HepG2 (cell line): ENCODE measurements at regions of chr14 and their contacts with region 1.

Region 1: DNA sequence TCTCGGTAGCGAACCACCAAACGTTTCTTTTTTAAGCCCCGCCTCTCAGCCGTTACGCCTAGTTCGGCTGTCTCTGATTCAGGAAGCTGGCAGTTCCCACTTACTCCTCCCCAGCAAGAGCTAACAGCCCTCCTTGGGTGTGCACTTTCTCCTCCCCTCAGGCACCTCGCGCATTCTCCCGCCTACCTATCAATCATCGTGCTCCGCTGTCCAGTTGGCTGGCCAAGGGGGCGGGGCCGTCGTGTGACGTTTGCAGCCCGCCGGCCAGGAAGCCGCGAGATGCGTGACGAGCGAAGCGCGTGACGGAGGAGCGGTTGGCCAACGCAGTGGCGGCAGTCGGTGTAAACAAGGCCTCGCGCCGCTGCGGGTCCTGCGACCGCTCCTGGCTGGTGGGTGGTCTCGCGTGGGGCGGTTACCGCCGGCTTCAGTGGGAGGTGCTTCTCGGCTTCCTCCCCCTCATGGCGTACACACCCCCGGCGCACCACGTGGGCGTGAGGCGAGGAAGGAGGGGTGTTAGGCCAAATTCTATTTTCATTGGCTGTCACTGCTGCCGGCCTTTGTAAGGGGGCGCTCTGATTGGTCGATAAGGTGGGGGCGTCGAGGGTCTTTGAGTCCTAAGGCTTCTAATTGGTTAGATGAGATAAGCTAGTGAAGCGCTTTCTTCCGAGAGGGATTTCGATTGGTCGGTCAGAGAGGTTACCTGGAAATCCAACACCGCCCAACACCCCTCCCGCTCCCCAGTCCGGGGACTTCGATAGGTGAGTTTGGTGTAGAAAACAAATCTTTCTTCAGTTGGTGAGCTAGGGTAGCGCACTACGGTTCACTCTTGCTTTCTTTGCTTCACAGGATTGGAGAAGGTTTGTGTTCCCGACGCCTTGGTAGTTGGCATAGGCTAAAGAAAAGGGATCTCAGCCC is at the starts of genes DCAF11 and NRL:
- DNase-seq: peak; percentile 100
- ATAC-seq: peak; percentile 88
- H3K4me3 ChIP-seq: peak within 1 kb of the TSS; percentile 66 to 96 (median 85)
- H3K27ac ChIP-seq: peak within 1 kb of the TSS; percentile 98
- H3K4me1 ChIP-seq: peaks cover 48% of the 10 kb centered on the region
- H3K27me3 ChIP-seq: no peaks in the 10 kb centered on the region; a peak in 1 of 5 replicates
- CTCF ChIP-seq: peak; percentile 50
- EP300 ChIP-seq: peak in 1 of 2 experiments; percentile 77; a peak in 2 of 4 replicates
- POLR2A ChIP-seq: peak in 1 of 2 experiments; percentile 97; a peak in 2 of 4 replicates
- RAD21 ChIP-seq: peak; percentile 78
- total RNA-seq, gene DCAF11: 257 and 342 TPM in 2 replicates
- total RNA-seq, gene NRL: 4.7 and 5.2 TPM in 2 replicates

Region 2: DNA sequence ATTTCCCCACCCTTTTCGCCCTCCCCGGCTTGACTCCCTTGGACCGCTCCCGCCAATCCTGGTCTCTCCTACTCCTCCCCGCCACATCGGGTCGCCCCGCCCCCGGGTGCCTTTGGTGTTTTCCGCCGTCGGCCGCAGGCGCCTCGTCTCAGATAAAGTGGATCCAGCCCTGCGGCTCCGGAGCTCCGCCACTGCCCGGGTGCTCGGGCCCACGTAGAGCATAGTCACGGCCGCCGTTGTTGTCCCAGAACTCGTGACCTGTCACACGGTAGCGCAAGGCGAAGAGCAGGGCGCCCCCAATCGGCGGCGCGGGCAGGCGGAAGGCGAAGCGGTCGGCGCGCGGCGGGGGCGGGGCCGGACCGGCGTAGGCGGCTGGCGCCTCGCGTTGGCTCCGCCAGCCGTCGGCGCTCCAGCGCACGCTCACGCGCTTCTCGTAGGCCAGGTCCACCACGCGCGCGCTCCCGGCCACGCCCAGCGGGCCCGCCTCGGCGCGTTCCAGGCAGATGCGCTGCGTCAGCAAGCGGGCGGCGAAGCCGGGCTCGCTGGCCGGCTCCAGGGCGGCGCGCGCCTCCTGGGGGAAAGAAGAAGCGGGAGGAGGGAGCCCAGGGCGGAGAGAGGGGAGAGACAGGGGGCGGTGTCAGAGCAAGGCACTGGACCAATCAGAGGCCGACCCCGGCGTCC is 813.4 kb before region 1 on chr14:
- CTCF ChIA-PET with region 1: no interaction called
- POLR2A ChIA-PET with region 1: interaction called, 7 read pairs
- in situ Hi-C with region 1: no loop called
- intact Hi-C with region 1: loop called (anchors 10 kb)
- DNase-seq: peak; percentile 100
- ATAC-seq: peak; percentile 87
- H3K4me3 ChIP-seq: peak overlapping the region; percentile 67 to 88 (median 75)
- H3K27ac ChIP-seq: peak overlapping the region; percentile 91
- H3K4me1 ChIP-seq: peaks cover 57% of the 10 kb centered on the region
- H3K27me3 ChIP-seq: no peaks in the 10 kb centered on the region; a peak in 1 of 5 replicates
- CTCF ChIP-seq: peak; percentile 92
- EP300 ChIP-seq: peak in 1 of 2 experiments; percentile 54; a peak in 2 of 4 replicates
- POLR2A ChIP-seq: no peak
- RAD21 ChIP-seq: peak; percentile 87

Region 3: DNA sequence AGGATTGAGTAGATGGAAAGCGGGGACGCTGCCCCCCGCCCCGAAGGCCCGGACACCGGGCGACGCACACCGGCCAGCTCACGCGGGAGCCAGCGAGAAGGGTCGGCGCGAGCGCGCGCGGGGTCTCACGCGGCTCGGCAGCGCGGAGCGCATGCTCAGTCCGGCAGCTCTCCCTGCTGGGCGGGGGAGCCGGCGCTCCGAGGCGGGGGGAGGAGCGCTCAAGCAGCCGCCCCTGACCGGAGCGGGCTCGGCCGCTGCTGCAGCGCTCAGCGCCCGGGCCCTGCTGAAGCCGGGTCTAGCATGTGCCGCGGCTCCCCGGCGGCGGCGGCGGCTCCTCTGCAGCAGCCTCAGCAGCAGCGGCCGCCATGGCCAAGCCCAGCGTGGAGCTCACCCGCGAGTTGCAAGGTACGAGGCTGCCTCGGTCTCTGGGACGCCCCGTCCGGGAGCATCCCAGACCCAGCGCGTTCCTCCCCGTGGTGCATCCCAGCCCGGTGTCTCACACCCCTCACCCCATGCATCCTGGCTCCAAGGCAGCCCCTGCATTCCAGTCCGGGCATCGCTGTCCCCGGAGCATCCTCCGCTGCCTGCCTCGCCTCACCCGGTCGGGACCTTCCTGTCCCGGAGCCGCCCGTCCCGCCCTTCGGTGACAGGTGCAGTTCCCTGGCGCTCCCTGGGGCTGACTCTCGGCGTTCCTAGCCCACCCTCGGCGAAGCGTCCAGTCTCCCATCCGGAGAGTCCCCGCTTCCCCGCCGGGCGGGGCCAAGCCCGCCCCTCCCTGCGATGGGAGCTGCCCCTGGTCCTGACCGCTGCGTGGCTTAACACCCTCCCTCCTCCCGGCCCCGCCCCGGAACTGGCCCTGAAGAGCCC is 62.8 kb before region 1 on chr14 and contains the start of gene CARMIL3:
- CTCF ChIA-PET with region 1: interaction called, 86 read pairs
- POLR2A ChIA-PET with region 1: interaction called, 62 read pairs
- in situ Hi-C with region 1: no loop called
- intact Hi-C with region 1: no loop called
- DNase-seq: peak; percentile 56
- ATAC-seq: peak; percentile 85
- H3K4me3 ChIP-seq: peak within 1 kb of the TSS; percentile 61 to 85 (median 71)
- H3K27ac ChIP-seq: no peak within 1 kb of the TSS
- H3K4me1 ChIP-seq: peaks cover 31% of the 10 kb centered on the region
- H3K27me3 ChIP-seq: peaks cover 20 to 77% of the 10 kb centered on the region in 2 experiments
- CTCF ChIP-seq: 0 out of 2 replicates have a peak, but pooled peaks have one; percentile 7
- EP300 ChIP-seq: no peak
- POLR2A ChIP-seq: no peak
- RAD21 ChIP-seq: peak; percentile 35; the same call in 1 of the 2 replicates
- total RNA-seq, gene CARMIL3: 0.13 and 0.27 TPM in 2 replicates

Region 4: DNA sequence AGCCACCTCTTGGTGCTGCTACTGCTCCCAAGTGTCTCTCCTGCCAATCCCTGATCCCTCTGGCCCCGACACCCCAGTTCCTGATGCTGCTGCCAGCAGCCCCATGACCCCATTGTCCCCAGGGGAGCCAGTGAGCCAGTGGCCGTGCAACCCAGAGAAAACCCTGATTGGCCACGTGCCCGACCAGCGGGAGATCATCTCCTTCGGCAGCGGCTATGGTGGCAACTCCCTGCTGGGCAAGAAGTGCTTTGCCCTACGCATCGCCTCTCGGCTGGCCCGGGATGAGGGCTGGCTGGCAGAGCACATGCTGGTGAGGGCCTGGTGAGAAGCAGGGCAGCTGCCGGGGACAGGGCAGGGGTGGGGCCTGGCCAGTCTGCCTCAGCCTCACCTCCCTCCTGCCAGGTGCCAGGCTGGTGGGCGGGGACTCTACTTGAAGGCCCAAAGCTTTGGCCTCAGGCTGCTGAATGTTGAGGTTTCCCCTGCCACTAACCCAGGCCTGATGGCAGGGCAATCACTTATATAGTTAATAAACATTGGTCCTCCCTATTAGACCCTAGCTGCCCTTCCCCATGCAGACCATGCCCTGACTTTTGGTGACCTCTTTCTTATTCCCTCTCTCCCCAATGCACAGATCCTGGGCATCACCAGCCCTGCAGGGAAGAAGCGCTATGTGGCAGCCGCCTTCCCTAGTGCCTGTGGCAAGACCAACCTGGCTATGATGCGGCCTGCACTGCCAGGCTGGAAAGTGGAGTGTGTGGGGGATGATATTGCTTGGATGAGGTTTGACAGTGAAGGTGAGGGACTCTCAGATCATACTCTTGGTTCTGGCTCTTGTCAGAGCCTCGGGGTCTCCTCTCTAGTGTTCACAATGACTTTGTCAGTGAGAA is 15.6 kb before region 1 on chr14:
- CTCF ChIA-PET with region 1: interaction called, 10 read pairs
- POLR2A ChIA-PET with region 1: interaction called, 627 read pairs
- in situ Hi-C with region 1: no loop called
- intact Hi-C with region 1: loop called (anchors 1 kb)
- DNase-seq: no peak
- ATAC-seq: no peak
- H3K4me3 ChIP-seq: no peak overlapping the region
- H3K27ac ChIP-seq: no peak overlapping the region
- H3K4me1 ChIP-seq: peaks cover 50% of the 10 kb centered on the region
- H3K27me3 ChIP-seq: peaks cover 0 to 6% of the 10 kb centered on the region in 2 experiments; a peak in 1 of 5 replicates
- CTCF ChIP-seq: no peak
- EP300 ChIP-seq: no peak
- POLR2A ChIP-seq: 0 out of 4 replicates have a peak, but pooled peaks of 1 of the 2 experiments have one; percentile 28
- RAD21 ChIP-seq: no peak

Region 5: DNA sequence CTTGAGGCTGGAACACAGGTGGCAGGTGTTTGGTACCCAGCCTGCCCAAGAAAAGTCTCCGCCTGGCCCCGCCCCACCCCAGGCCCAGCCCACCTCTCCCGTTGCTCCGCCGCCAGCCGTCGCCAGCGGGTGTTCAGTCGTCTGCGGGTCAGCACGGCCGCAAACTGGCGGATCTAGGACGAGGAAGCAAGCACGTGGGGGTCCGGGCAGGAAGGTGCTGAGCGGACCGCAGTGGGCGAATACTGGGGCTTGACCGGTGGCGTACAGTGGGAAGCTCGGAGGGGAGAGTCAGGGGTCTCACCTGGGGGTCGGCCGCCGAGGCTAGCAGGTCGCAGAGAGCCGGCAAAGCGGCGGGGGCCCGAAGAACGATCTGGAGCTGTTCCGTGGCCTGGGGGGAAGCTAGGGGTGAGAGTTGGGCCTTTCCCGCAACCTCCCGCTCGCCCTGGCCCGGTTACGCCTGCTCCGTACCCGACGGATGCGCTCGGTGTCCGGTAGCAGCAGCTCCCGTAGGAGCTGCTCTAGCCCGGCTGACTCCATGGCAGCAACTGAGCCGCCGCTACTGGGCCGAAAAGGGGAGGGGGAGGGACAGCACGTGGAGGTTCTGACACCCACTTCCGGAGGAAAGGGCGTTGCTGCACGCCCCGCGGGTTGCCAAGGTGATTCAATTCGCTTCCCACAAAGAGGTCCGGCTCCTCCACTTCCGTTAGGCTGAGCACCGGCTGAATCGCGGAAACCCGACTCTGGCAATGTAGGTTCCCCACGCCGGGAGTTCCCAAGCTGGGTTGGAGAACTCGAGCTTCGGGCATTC is 73.7 kb after region 1 on chr14 and contains the start of gene IPO4:
- CTCF ChIA-PET with region 1: no interaction called
- POLR2A ChIA-PET with region 1: interaction called, 76 read pairs
- in situ Hi-C with region 1: no loop called
- intact Hi-C with region 1: loop called (anchors 2 kb)
- DNase-seq: peak; percentile 100
- ATAC-seq: peak; percentile 88
- H3K4me3 ChIP-seq: peak within 1 kb of the TSS; percentile 70 to 92 (median 77)
- H3K27ac ChIP-seq: peak within 1 kb of the TSS; percentile 64
- H3K4me1 ChIP-seq: peaks cover 42% of the 10 kb centered on the region
- H3K27me3 ChIP-seq: no peaks in the 10 kb centered on the region
- CTCF ChIP-seq: peak; percentile 49
- EP300 ChIP-seq: peak; percentile 85 to 87; a peak in 3 of 4 replicates
- POLR2A ChIP-seq: peak in 1 of 2 experiments; percentile 98; a peak in 2 of 4 replicates
- RAD21 ChIP-seq: peak; percentile 77
- total RNA-seq, gene IPO4: 149 and 179 TPM in 2 replicates

Region 6: DNA sequence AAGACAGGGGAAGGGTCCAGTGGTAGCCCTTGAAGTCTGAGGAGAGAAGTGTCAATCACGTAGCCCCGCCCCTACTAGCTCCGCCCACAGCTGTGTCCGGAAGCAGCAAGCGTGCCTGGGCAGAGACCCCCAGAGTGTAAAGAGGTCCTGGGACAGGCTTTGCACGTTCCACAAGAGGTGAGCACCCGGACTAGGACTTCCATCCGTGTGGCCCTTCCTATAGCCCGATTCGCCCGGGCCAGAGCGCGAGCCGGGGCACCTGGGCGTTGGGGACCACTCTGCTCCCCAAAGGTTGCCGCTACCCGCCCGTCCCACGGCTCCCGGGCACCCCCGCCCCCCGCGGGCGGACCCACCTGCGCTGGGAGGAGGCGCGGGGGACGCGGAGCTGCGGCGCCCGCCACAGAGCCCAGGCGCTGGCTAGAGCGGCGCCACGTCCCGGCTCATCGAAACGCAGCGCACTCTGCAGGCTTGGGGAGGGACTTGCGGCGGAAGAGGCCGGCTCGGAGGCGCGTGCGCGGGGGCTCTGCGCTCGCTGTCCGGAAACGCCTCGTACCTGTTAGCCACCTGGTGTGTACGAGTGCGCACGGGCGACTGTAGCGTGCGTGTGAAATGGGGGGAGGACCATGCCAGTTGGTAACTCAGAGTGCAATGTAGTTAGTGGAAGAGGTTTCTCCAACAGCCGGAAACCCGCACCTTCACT is 156.5 kb after region 1 on chr14 and contains the start of gene RABGGTA:
- CTCF ChIA-PET with region 1: no interaction called
- POLR2A ChIA-PET with region 1: interaction called, 52 read pairs
- in situ Hi-C with region 1: no loop called
- intact Hi-C with region 1: no loop called
- DNase-seq: peak; percentile 96
- ATAC-seq: peak; percentile 95
- H3K4me3 ChIP-seq: peak within 1 kb of the TSS; percentile 78 to 96 (median 78)
- H3K27ac ChIP-seq: peak within 1 kb of the TSS; percentile 92
- H3K4me1 ChIP-seq: peaks cover 22% of the 10 kb centered on the region
- H3K27me3 ChIP-seq: no peaks in the 10 kb centered on the region; a peak in 1 of 5 replicates
- CTCF ChIP-seq: peak; percentile 99
- EP300 ChIP-seq: peak; percentile 76 to 86; a peak in 3 of 4 replicates
- POLR2A ChIP-seq: peak in 1 of 2 experiments; percentile 96; a peak in 2 of 4 replicates
- RAD21 ChIP-seq: peak; percentile 91
- total RNA-seq, gene RABGGTA: 31.2 and 57.9 TPM in 2 replicates